Transverse colon (tissue), 4 donors: ENCODE measurements at regions of chr9 and their contacts with region 1.

Region 1: DNA sequence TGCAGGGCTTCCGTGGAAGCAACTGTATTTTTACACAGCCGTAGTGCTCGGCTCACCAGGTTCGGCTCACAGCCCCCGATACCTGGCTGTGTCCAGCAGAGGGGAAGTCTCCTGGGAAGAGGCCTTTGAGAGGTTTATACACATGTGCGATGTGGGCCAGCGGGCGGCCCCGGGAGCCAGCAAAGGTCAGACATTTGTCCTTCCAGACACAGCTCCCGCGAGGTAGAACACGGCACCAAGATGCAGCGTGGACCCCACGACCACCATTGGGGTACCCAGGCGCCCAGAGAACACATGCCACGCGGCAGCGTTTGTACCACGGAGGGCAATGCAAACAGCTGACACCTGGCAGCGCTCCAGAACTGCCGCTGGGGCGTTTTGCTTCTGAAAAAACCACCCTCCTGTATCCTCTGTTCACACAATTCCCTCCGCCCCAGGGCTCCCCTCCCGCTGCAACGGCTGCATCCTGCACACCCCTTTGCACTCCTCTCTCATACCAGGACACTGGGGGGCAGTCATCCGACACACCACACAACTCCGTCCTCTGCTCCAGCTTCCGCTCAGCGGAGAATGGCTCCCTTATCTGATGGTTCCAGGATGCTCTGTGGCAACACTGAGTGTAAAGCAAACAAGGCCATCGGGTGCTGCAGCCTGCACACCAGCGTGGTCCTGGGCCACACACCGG is 235.3 kb downstream of the SYK start:
- DNase-seq: peak; percentile 79
- H3K4me3 ChIP-seq: no peak overlapping the region
- H3K27ac ChIP-seq: peak overlapping the region; percentile 57 to 73 (median 65)
- H3K4me1 ChIP-seq: peaks cover 15 to 21% (median 20%) of the 10 kb centered on the region in 4 donors
- H3K27me3 ChIP-seq: no peaks in the 10 kb centered on the region
- CTCF ChIP-seq: peak; percentile 44 to 78 (median 46)
- EP300 ChIP-seq: no peak
- POLR2A ChIP-seq: no peak

Region 2: DNA sequence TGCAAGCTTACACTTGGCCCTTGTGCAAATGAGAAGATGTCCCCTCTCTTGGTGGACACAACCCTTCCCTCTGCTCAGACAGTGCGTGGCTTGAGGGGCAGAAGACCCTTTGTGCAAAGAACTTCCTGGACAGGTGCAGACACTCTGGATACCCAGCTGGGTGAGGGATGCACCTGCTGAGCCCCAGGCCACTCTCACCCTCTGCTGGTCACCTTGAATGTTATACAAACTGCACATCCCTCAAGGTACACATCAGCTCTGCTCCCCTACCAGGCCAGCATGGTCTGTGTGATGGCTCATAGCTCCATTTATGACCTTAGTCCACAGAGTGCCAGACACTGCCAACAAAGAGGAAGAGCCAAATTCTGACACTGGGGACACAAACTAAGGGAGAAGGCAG is 391.3 kb before region 1 on chr9:
- in situ Hi-C with region 1: no loop called
- intact Hi-C with region 1: no loop called
- DNase-seq: no peak
- H3K4me3 ChIP-seq: no peak overlapping the region
- H3K27ac ChIP-seq: no peak overlapping the region
- H3K4me1 ChIP-seq: peaks cover 3 to 12% (median 9%) of the 10 kb centered on the region in 4 donors
- H3K27me3 ChIP-seq: peaks cover 59% of the 10 kb centered on the region
- CTCF ChIP-seq: no peak
- EP300 ChIP-seq: no peak
- POLR2A ChIP-seq: no peak

Region 3: DNA sequence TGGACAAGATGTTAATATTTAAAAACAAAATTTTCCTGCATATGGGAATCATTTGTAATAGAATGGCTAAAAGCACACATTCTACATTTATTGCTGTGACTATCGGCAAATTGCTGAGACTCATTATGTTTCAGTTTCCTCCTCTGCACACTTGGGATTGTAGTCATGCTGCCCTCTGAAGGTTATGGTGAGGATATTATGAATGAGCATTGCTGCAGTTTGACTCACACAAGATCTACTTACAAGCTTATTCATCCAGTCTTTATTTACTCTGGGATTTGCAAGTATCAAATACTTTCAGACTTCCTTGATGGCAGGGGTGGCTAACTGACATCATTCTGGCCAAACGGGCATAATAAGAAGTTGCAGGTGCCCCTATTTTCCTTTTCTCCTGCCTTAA is 396.2 kb after region 1 on chr9:
- in situ Hi-C with region 1: loop called in 3 of 4 experiments (anchors 5 to 25 kb)
- intact Hi-C with region 1: loop called (anchors 5 kb)
- DNase-seq: no peak
- H3K4me3 ChIP-seq: no peak overlapping the region
- H3K27ac ChIP-seq: no peak overlapping the region
- H3K4me1 ChIP-seq: peaks cover 3 to 8% (median 3%) of the 10 kb centered on the region in 4 donors
- H3K27me3 ChIP-seq: peaks cover 4% of the 10 kb centered on the region
- CTCF ChIP-seq: peak; percentile 49 to 56 (median 52)
- EP300 ChIP-seq: no peak
- POLR2A ChIP-seq: no peak

Region 4: DNA sequence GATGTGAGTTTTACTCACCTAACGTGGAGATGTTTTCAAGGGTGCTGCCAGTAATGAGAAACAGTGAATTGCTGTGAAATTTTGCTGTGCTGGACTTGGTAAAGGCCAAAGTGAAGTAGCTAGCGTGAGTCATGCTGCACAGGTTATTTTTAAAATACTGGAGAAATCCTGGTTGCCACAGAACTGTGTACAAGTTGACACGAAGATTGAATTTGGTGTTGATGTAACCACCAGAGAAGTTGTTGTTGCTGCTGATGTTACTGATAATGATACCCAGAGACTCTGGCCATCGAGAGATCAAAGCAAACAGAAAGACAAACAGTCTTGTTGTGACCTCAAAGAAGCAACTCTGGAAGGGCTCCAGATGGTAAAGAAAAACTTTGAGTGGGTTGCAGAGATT is 574.7 kb after region 1 on chr9:
- in situ Hi-C with region 1: no loop called
- intact Hi-C with region 1: no loop called
- DNase-seq: no peak
- H3K4me3 ChIP-seq: no peak overlapping the region
- H3K27ac ChIP-seq: no peak overlapping the region
- H3K4me1 ChIP-seq: peaks cover 0 to 2% (median 0%) of the 10 kb centered on the region in 4 donors
- H3K27me3 ChIP-seq: no peaks in the 10 kb centered on the region
- CTCF ChIP-seq: no peak
- EP300 ChIP-seq: no peak
- POLR2A ChIP-seq: no peak